ENCODE measurements at regions of chr10 and their contacts with region 1.

Region 1: DNA sequence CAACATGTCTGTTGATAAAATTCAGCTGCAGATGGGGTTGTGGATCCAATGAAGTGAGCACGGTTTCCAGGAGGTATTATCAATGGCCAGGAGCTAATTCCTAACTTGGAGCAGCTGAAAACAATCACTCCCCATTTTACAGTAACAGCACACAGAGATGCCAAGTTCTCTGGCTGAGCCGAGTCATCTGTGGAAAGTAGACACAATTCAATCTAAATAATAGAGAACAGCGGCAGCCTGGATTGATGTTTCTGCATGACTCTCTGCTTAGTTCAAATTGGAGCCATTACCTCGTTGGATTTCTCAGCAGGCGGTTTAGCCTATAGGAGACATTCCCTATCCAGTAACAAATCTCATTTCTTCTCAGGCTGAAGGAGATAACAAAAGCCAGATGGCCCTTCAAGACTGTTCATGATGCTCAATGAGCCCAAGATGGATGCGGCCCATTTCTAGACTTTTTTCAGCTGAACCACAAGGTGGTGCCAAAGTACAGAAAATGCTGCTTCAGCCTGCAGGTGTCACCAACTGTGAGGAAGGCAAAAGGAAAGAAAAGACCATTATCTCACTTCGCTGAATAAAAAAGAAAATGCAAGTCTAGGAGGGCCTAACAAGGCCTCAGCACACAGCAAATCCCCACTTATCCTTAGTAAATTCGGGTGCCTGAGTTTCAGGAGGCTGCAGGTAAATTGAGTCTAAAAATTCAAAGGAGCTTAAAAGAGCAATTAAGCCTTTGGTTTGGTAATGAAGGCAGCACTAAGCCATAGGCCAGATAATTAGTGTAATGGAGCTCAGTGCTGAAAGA is 83.7 kb downstream of the SLC16A9 start:
- DNase-seq: peak; percentile 59
- ATAC-seq: peak; percentile 82
- H3K4me3 Mint-ChIP-seq: no peak overlapping the region
- H3K27ac Mint-ChIP-seq: no peak overlapping the region
- H3K4me1 Mint-ChIP-seq: peaks cover 2% of the 10 kb centered on the region
- H3K27me3 Mint-ChIP-seq: no peaks in the 10 kb centered on the region

Region 2: GRCh38 chr10:58531084-58531695 is 1094.7 kb before region 1 on chr10:
- CTCF ChIA-PET with region 1: interaction called, 5 read pairs
- POLR2A ChIA-PET with region 1: no interaction called
- intact Hi-C with region 1: loop called in 1 of 2 experiments (anchors 5 kb)
- DNase-seq: peak; percentile 71
- ATAC-seq: peak; percentile 74
- H3K4me3 Mint-ChIP-seq: no peak overlapping the region
- H3K27ac Mint-ChIP-seq: no peak overlapping the region
- H3K4me1 Mint-ChIP-seq: no peaks in the 10 kb centered on the region
- H3K27me3 Mint-ChIP-seq: peaks cover 9% of the 10 kb centered on the region

Region 3: GRCh38 chr10:58952747-58953466 is 673.0 kb before region 1 on chr10:
- CTCF ChIA-PET with region 1: interaction called, 3 read pairs
- POLR2A ChIA-PET with region 1: no interaction called
- intact Hi-C with region 1: loop called (anchors 1 to 5 kb)
- DNase-seq: peak; percentile 29
- ATAC-seq: no peak
- H3K4me3 Mint-ChIP-seq: no peak overlapping the region
- H3K27ac Mint-ChIP-seq: no peak overlapping the region
- H3K4me1 Mint-ChIP-seq: no peaks in the 10 kb centered on the region
- H3K27me3 Mint-ChIP-seq: peaks cover 3% of the 10 kb centered on the region

Region 4: DNA sequence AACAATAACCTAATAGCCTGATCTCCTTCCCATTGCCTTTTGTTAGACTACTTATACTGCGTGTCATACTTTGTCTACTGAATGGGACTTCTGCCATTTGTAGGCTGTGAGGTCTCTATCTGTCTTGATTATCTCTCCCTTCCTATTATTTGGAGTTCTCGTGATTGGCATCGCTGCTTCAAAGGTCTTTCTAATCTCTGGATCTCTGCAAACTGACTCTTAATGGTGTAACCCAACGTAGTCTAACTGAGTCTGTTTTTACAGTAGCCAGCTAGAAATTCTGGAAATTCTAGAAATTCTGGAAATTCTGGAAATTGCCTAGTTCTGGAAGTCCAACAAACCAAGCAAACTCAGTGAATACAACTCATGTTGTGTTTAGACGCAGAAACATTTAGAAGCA is 419.7 kb before region 1 on chr10:
- CTCF ChIA-PET with region 1: no interaction called
- POLR2A ChIA-PET with region 1: no interaction called
- intact Hi-C with region 1: no loop called
- DNase-seq: no peak
- ATAC-seq: no peak
- H3K4me3 Mint-ChIP-seq: no peak overlapping the region
- H3K27ac Mint-ChIP-seq: no peak overlapping the region
- H3K4me1 Mint-ChIP-seq: no peaks in the 10 kb centered on the region
- H3K27me3 Mint-ChIP-seq: peaks cover 4% of the 10 kb centered on the region

Region 5: DNA sequence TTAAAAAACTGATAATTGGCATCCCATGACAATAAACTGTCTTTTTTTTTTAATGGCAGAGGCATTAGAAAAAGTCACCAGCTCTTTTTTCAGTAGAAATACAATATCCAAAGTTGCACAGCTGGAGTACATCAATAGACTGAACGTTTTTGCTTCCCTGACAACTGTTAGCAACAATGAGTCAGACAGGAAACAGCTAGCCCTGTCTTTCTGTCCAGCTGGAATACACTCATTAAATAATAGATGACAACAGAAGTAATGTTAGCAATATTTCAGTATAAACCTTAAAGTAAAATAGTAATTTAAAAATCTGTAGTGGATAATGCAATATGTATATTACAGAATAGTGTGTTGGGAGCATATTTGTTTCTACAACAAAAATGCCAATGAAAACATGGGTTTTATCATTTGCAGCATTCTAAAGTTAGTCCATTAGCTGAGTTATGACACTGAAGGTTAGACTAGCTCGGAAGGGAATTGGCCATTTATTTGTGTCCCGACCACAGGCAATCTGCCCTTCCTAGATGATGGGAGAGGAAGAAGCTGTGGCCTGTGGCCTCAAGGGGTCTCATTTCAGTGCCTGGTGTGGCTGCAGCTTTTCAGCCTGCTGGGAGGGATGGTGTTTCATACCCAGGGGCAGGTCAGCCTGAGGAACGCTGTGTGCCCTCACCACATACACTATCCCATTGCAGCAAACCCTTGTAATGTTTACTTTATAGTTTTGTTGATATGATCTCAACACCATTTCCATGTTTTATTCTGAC is 89.6 kb before region 1 on chr10:
- CTCF ChIA-PET with region 1: no interaction called
- POLR2A ChIA-PET with region 1: no interaction called
- intact Hi-C with region 1: no loop called
- DNase-seq: no peak
- ATAC-seq: no peak
- H3K4me3 Mint-ChIP-seq: no peak overlapping the region
- H3K27ac Mint-ChIP-seq: no peak overlapping the region
- H3K4me1 Mint-ChIP-seq: no peaks in the 10 kb centered on the region
- H3K27me3 Mint-ChIP-seq: no peaks in the 10 kb centered on the region

Region 6: GRCh38 chr10:59779756-59780533 is 154.0 kb after region 1 on chr10:
- CTCF ChIA-PET with region 1: no interaction called
- POLR2A ChIA-PET with region 1: no interaction called
- intact Hi-C with region 1: no loop called
- DNase-seq: no peak
- ATAC-seq: no peak
- H3K4me3 Mint-ChIP-seq: no peak overlapping the region
- H3K27ac Mint-ChIP-seq: no peak overlapping the region
- H3K4me1 Mint-ChIP-seq: no peaks in the 10 kb centered on the region
- H3K27me3 Mint-ChIP-seq: peaks cover 2% of the 10 kb centered on the region

Region 7: DNA sequence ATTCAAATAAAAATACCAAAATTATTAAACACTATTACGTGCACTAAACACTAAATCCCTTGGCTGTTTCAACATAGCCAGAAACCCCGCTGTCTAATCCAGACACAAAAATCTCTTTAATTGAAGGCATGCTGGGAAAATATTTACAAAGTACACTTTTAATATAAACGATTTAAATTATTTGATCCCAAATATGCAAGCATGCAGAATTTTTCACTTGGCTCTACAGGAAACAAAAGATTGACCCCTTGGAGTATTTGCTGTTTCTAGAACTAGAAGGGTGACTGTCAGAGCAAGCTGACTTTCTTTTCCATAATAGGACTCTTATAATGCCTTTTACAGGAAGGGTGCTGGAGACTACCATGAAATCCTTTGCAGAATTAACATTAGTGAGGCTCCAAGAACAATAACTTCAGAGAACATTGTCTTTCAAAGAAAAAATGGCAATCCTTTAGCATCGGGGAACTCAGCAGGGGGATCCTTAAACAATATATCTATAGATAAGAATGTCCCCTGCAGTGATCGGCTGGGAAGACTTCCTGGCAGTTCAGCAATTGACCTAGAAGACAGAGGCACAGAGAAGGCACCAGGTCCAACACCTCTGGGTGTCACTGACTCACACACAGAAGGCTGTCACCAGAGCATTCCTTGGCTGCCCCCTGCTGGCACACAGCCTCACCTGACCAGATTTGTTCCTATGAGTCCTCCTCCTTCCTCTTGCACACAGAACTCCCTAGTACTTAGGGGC is 183.1 kb after region 1 on chr10:
- CTCF ChIA-PET with region 1: interaction called, 12 read pairs
- POLR2A ChIA-PET with region 1: no interaction called
- intact Hi-C with region 1: loop called (anchors 1 kb)
- DNase-seq: peak; percentile 88
- ATAC-seq: peak; percentile 98
- H3K4me3 Mint-ChIP-seq: no peak overlapping the region
- H3K27ac Mint-ChIP-seq: no peak overlapping the region
- H3K4me1 Mint-ChIP-seq: no peaks in the 10 kb centered on the region
- H3K27me3 Mint-ChIP-seq: no peaks in the 10 kb centered on the region

Region 8: DNA sequence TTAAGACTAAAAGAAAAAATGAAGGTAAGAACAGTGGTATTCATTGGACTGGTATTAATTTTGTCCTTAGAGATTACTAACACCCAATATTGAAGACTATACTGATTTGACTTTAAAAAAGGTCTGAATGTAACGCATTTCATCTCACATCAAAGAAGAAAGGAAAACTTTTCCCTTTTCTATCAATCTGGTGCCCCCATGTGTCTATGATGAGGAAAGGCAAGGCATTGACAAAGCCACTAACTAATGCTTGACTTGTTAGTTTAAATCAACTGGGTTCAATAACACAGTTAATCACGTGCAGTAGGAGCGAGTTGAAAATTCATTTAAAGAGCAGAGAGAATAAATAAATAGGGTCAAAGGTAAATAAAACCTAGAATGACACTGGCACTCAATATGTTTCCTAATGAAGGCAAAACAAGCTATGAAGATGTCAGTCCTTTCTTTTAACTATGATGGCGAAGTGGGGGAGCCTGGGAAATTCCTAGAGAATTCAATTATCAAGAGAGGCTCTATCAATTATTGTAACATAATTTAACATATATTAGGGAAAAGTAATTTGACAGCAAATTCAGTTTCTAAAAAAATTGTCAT is 582.9 kb after region 1 on chr10:
- CTCF ChIA-PET with region 1: no interaction called
- POLR2A ChIA-PET with region 1: no interaction called
- intact Hi-C with region 1: loop called (anchors 2 kb)
- DNase-seq: no peak
- ATAC-seq: no peak
- H3K4me3 Mint-ChIP-seq: no peak overlapping the region
- H3K27ac Mint-ChIP-seq: no peak overlapping the region
- H3K4me1 Mint-ChIP-seq: peaks cover 15% of the 10 kb centered on the region
- H3K27me3 Mint-ChIP-seq: no peaks in the 10 kb centered on the region

Measured in activated CD4-positive, alpha-beta T cell treated with anti-CD3 and anti-CD28 coated beads for 36 hours (primary cell).